ENCODE measurements at regions of chr7 and their contacts with region 1.

Region 1: GRCh38 chr7:135281363-135281949 is 47.8 kb downstream of the STRA8 start:
- DNase-seq: peak; percentile 82 to 86
- H3K4me3 ChIP-seq: no peak overlapping the region
- H3K27ac ChIP-seq: no peak overlapping the region
- H3K4me1 ChIP-seq: peaks cover 4 to 5% of the 10 kb centered on the region in 2 donors
- H3K27me3 ChIP-seq: no peaks in the 10 kb centered on the region
- CTCF ChIP-seq: peak; percentile 82 to 99 (median 94)
- POLR2A ChIP-seq: no peak

Region 2: DNA sequence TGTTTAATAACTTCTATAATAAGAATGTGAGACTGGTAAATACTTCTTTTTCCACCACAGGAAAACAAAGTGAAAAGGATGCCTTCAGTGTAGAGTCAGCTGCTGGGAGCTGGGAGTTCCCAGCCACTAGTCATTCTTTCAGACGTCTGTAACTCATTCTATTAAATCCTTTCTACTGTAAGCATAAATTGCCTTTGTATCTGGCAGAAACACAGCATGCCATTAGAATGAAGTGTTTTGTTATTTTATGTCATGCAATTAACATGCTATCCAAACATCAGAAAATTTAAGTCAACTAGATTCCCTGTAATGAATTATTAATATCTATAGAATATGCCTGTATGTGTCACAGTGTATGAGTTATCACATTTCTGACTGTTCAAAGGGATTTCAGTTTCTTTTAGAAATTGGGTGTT is 620.5 kb before region 1 on chr7:
- intact Hi-C with region 1: no loop called
- DNase-seq: no peak
- H3K4me3 ChIP-seq: no peak overlapping the region
- H3K27ac ChIP-seq: no peak overlapping the region
- H3K4me1 ChIP-seq: no peaks in the 10 kb centered on the region
- H3K27me3 ChIP-seq: no peaks in the 10 kb centered on the region
- CTCF ChIP-seq: no peak
- POLR2A ChIP-seq: no peak

Region 3: GRCh38 chr7:135334830-135335543 is 53.5 kb after region 1 on chr7:
- intact Hi-C with region 1: loop called (anchors 5 kb)
- DNase-seq: peak; percentile 7 to 21
- H3K4me3 ChIP-seq: no peak overlapping the region
- H3K27ac ChIP-seq: no peak overlapping the region
- H3K4me1 ChIP-seq: peaks cover 14 to 23% of the 10 kb centered on the region in 2 donors
- H3K27me3 ChIP-seq: no peaks in the 10 kb centered on the region
- CTCF ChIP-seq: no peak
- POLR2A ChIP-seq: no peak

Region 4: DNA sequence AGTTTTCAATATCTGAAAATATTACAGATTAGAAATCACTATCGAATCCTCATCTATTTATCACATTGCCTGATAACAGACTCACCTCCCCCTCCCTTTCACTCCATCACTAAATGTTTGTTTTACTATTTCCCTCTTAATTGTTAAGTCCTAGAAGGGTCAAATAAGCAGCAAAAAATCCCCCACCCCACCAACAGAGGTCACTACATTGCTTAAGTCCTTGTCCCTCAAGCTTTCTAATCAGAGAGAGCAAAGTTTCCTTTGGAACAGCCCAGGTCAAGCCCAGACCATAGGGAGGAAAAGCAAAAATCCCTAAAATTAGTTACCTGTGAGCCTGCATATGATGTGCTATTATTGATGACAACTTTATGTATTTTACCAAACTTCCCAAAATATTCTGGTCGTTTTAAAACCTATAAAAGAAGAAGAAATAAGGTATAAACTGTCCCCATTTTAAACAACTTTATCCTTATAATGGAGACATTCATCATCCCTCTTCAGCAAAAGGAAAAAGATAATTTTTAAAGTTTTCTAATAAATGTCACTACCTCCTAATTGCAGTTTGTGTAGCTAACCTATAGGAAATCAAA is 133.5 kb after region 1 on chr7:
- intact Hi-C with region 1: no loop called
- DNase-seq: peak; percentile 26 to 27
- H3K4me3 ChIP-seq: no peak overlapping the region
- H3K27ac ChIP-seq: no peak overlapping the region
- H3K4me1 ChIP-seq: no peaks in the 10 kb centered on the region
- H3K27me3 ChIP-seq: no peaks in the 10 kb centered on the region
- CTCF ChIP-seq: peak in 4 of 6 experiments; percentile 8 to 42 (median 34)
- POLR2A ChIP-seq: no peak

Region 5: DNA sequence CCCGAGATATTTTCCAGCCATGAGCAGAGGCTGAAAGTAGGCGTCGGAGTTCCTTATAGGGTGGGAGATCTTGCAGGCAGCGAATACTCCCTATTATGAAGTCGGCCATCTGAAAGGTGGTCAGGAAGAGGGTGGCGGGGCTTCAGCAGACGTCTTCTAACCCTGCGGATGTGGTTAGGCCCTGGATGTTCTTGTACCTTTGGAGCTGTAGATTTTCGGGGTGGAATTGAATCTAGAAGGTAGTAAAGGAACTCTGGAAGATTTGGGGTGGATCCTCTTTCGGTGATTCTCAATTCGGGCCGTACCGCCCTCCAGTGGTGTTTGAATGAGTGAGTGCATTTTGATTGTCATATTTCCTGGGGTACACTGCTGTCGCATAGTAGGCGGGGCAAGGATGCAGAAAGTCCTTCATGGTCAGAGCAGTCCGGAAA is 276.9 kb after region 1 on chr7:
- intact Hi-C with region 1: loop called (anchors 5 kb)
- DNase-seq: peak; percentile 42 to 49
- H3K4me3 ChIP-seq: peak overlapping the region; percentile 53 to 72 (median 66)
- H3K27ac ChIP-seq: peak overlapping the region; percentile 64 to 86 (median 85)
- H3K4me1 ChIP-seq: peaks cover 6 to 10% of the 10 kb centered on the region in 2 donors
- H3K27me3 ChIP-seq: no peaks in the 10 kb centered on the region
- CTCF ChIP-seq: peak in 3 of 6 experiments; percentile 36 to 49 (median 45)
- POLR2A ChIP-seq: no peak

Measured in thyroid gland (tissue), 4 donors.